ENCODE measurements at regions of chr2 and their contacts with region 1.

Region 1: GRCh38 chr2:56754066-56754615 is 570.4 kb downstream of the CCDC85A start:
- DNase-seq: no peak
- H3K4me3 ChIP-seq: no peak overlapping the region
- H3K27ac ChIP-seq: no peak overlapping the region
- H3K4me1 ChIP-seq: no peaks in the 10 kb centered on the region
- H3K27me3 ChIP-seq: no peaks in the 10 kb centered on the region
- CTCF ChIP-seq: no peak
- POLR2A ChIP-seq: no peak

Region 2: DNA sequence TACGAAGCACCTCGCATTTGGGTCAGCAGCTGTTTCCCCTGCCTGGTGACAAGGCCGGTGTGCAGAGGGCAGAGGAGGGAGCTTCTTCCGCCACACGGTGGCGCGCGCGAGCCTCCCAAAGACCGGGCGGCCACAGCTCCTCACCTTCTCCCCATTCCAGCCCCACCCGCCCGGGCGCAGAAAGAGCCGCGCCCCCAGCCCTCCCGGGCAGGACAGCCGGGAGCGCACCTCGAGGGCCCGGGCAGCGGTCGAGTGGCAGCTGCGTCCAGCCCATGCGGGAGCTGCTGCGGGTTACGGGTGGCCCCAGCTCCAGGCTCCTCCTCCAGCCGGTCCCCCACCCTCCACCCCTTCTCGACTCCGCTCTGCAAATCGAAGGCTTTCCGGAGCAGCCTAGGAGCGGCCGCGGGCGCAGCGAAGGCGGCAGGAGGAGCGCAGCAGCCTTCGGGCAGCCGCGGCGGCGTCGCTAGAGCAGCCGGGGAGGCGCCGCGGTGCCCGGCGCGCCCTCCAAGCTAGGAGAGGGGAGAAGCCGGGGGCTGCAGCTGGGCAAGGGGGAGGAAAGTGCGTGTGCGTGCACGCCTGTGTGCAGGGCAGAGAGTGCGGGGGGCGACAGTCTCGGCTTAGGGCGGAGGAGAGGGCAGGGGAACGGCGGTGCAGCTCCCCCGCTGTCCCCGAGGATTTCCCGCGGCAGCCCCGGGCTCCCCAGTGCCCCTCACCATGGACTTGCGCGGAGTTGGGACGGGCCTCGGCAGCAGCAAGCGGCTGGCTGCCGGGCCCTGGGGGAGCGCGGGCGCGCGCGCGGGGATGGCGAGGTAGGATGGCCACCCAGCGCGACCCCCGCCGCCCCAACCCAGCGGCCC is 570.3 kb before region 1 on chr2 and contains the start of gene CCDC85A:
- intact Hi-C with region 1: loop called (anchors 10 kb)
- DNase-seq: no peak
- H3K4me3 ChIP-seq: peak within 1 kb of the TSS; percentile 39 to 74 (median 54)
- H3K27ac ChIP-seq: peak within 1 kb of the TSS in 3 of 4 donors; percentile 49 to 72 (median 67)
- H3K4me1 ChIP-seq: peaks cover 7 to 28% (median 19%) of the 10 kb centered on the region in 3 donors
- H3K27me3 ChIP-seq: peaks cover 0 to 79% (median 6%) of the 10 kb centered on the region in 4 donors
- CTCF ChIP-seq: peak; percentile 48 to 90 (median 81)
- POLR2A ChIP-seq: no peak
- total RNA-seq, gene CCDC85A: 0.42 to 2.1 (median 1.3) TPM

Region 3: GRCh38 chr2:56834686-56835085 is 80.5 kb after region 1 on chr2:
- intact Hi-C with region 1: no loop called
- DNase-seq: no peak
- H3K4me3 ChIP-seq: no peak overlapping the region
- H3K27ac ChIP-seq: no peak overlapping the region
- H3K4me1 ChIP-seq: no peaks in the 10 kb centered on the region
- H3K27me3 ChIP-seq: no peaks in the 10 kb centered on the region
- CTCF ChIP-seq: no peak
- POLR2A ChIP-seq: no peak

Region 4: DNA sequence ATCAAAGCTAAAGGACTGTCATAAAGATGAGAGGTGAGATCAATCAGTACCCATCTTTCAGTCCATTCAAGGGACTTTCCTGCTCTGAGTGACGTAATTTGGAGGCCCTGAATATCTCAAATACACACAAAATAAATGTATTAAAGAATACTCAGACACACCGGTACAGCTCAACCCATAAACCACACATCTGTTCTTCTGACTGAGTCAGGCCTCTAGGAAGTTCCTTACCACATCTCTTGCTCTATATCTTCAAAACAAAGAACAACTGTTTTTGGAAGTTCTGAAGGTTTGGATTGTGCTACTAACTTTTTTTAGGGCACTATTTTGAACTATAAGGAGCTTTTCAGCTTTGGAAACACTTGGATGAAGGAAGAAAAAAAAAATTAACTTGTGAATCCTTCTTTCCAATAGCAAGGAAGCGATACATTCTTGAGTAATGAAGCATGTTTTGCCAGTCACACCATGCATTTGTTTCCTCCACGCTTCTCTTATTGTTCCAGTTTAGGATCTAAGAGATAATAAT is 426.0 kb after region 1 on chr2:
- intact Hi-C with region 1: no loop called
- DNase-seq: no peak
- H3K4me3 ChIP-seq: no peak overlapping the region
- H3K27ac ChIP-seq: no peak overlapping the region
- H3K4me1 ChIP-seq: no peaks in the 10 kb centered on the region
- H3K27me3 ChIP-seq: no peaks in the 10 kb centered on the region
- CTCF ChIP-seq: no peak
- POLR2A ChIP-seq: no peak